Activated T-helper 2 cell treated with anti-CD3 and anti-CD28 coated beads, Interferon-gamma antibody, Interleukin-2, Interleukin-4, amounts not matched to agents 10 μg/mL and 5 μg/mL and 100 μg/mL, durations not matched to agents 14 hours and 24 hours and 36 hours (primary cell): ENCODE measurements at regions of chr3 and their contacts with region 1.

Region 1: GRCh38 chr3:23805633-23806533 is at the start of gene UBE2E1:
- DNase-seq: peak; percentile 55
- H3K4me3 Mint-ChIP-seq: peak within 1 kb of the TSS; percentile 91
- H3K27ac Mint-ChIP-seq: peak within 1 kb of the TSS; percentile 94
- H3K4me1 Mint-ChIP-seq: peaks cover 40% of the 10 kb centered on the region
- H3K27me3 Mint-ChIP-seq: peaks cover 25% of the 10 kb centered on the region
- total RNA-seq, gene UBE2E1: 63.9 and 70.2 TPM in 2 replicates

Region 2: DNA sequence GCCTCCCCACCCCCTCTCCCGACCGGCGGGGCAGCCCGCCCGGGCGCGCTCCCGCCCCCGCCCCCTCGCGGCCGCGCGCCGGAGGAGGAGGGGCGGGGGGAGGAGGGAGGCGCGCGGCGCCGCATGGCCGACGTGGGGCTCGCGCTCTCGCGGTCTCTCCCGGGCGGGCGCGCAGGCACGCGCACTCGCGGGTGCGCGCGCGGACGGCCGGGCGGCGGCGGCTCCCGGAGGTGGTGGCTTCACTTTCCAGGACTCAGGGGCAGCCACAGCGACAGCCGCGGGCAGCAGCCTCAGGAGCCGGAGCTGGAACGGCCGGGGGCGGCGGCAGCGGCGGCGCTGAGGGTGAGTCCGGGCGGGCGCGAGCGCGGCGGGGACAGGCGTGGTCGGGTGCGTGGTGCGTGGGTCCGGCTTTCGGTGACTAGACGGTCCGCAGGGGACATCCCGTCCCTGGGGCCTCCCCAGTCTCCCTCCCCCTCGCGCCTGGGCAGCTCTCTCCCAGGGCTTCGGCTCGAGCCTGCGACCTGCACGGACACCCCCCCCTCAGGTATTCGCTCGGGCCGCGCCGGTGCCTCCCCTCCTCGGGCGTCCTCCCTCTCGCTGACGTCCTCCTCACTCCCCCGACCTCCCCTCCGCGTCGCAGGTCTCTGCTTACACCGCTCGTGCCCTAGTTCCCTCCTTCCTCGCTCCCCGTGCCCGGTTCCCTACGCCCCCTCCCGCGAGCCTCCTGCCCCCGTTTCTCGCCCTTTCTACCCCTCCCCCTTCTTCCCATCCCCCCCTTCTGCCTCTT is 602.8 kb before region 1 on chr3 and contains the start of gene UBE2E2:
- intact Hi-C with region 1: loop called (anchors 10 kb)
- DNase-seq: peak; percentile 45
- H3K4me3 Mint-ChIP-seq: peak within 1 kb of the TSS; percentile 93
- H3K27ac Mint-ChIP-seq: peak within 1 kb of the TSS; percentile 76
- H3K4me1 Mint-ChIP-seq: peaks cover 21% of the 10 kb centered on the region
- H3K27me3 Mint-ChIP-seq: peaks cover 42% of the 10 kb centered on the region
- total RNA-seq, gene UBE2E2: 6.3 and 7.5 TPM in 2 replicates

Region 3: DNA sequence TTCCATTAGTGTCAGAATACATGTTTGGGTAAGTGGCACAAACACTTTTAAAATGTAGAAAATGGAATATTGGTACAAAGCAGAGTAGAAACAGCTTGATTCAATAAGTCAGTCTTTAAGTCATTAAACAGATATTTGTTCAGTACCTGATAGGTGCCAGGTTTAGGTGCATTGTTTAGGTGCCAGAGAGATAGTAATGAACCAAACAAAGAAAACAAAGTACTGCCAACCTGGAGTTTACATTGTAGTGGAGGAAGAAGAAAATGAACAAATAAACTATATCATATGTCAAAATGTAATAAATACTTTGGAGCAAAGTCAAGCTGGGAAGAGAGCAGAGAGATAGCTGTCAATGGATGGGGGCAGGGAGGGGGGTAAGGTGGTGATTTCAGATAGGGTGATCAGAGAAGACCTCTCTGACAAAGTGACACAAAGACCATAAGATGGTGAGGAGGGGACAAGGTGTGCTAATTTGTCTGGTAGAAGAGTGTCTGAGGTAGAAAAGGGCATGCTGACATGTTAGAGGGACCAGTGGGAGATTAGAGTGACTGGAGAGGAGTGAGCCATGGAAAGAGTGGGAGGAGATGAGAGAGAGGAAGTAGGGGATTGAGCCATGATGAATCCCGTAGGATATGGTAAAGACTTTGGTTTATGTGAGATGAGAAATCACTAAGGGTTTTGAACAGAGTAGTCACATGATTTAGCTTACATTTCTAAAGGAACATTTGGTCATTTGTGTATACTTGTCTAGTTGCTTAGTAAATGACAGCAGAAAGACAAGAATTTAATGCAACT is 474.5 kb before region 1 on chr3:
- intact Hi-C with region 1: no loop called
- DNase-seq: no peak
- H3K4me3 Mint-ChIP-seq: no peak overlapping the region
- H3K27ac Mint-ChIP-seq: no peak overlapping the region
- H3K4me1 Mint-ChIP-seq: no peaks in the 10 kb centered on the region
- H3K27me3 Mint-ChIP-seq: no peaks in the 10 kb centered on the region

Region 4: DNA sequence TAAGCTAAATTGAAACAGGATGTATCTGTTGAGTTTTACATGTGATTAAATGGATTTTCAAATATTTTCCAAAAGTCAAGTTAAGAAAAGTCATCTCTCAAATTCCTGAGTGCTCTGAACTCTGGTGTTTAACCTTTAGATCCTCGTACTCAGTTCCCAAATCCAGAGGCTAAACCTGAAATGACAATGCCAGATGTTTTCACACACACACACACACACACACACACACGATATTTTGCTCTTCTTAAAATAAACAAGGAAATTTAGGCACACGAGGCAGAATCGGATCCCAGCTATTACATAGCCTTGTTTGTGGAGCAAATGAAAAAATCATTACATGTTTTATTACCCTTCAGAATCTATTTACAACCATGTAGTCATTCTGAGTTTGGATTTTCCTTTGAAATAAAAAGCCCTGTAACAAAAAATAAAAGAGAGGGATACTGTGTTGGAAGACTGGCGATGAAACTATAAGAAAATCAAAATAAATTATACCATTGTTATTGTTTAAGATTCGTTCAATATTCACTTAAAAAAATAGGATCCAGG is 20.7 kb before region 1 on chr3:
- intact Hi-C with region 1: no loop called
- DNase-seq: no peak
- H3K4me3 Mint-ChIP-seq: no peak overlapping the region
- H3K27ac Mint-ChIP-seq: no peak overlapping the region
- H3K4me1 Mint-ChIP-seq: no peaks in the 10 kb centered on the region
- H3K27me3 Mint-ChIP-seq: peaks cover 29% of the 10 kb centered on the region

Region 5: GRCh38 chr3:23830869-23831484 is 25.1 kb after region 1 on chr3:
- intact Hi-C with region 1: no loop called
- DNase-seq: no peak
- H3K4me3 Mint-ChIP-seq: no peak overlapping the region
- H3K27ac Mint-ChIP-seq: no peak overlapping the region
- H3K4me1 Mint-ChIP-seq: peaks cover 23% of the 10 kb centered on the region
- H3K27me3 Mint-ChIP-seq: no peaks in the 10 kb centered on the region

Region 6: DNA sequence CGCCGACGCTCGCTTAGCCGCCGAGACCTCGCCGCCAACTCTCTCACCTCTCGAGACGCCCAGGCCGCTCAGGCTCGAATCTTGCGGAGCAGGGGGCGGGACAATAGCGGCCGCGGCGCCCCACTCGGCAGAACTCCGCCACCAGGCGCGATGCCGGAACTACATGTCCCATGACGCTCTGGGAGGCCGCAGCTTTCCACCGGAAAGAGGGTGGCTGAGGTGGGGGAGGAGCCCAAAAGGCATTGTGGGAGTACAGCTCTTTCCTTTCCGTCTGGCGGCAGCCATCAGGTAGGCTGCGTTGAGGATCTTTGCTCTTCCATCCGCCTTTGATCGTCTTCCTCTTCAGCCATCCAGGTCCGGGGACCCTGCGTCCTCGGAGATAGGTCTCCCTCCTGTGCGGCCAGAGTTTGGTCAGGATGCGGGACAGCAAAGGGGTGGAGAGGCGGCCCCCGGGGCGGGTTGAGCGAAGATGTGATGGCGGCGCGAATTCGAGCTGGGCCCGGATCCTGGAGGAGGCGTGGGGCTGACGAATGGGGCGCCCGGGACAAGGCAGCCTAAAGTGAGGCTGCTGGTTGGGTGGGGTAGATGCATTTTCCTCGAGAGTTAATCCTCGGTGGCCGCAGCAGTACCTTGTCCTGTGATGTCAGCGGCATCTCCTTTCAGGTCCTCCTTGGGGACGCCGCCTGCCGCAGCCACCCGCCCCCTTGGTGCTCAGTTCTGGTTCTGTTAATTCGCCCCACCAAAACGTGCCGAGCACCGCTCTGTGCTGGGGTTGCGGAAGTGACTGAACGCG is 111.2 kb after region 1 on chr3 and contains the starts of genes NKIRAS1 and RPL15:
- intact Hi-C with region 1: loop called (anchors 1 kb)
- DNase-seq: peak; percentile 95
- H3K4me3 Mint-ChIP-seq: peak within 1 kb of the TSS; percentile 96
- H3K27ac Mint-ChIP-seq: peak within 1 kb of the TSS; percentile 92
- H3K4me1 Mint-ChIP-seq: peaks cover 45% of the 10 kb centered on the region
- H3K27me3 Mint-ChIP-seq: peaks cover 16% of the 10 kb centered on the region
- total RNA-seq, gene NKIRAS1: 2.3 TPM in 2 replicates
- total RNA-seq, gene RPL15: 1,859 and 1,865 TPM in 2 replicates

Region 7: GRCh38 chr3:24686808-24687207 is 880.9 kb after region 1 on chr3:
- intact Hi-C with region 1: loop called (anchors 5 kb)
- DNase-seq: no peak
- H3K4me3 Mint-ChIP-seq: no peak overlapping the region
- H3K27ac Mint-ChIP-seq: no peak overlapping the region
- H3K4me1 Mint-ChIP-seq: peaks cover 9% of the 10 kb centered on the region
- H3K27me3 Mint-ChIP-seq: peaks cover 38% of the 10 kb centered on the region